Activated CD4-positive, alpha-beta T cell treated with anti-CD3 and anti-CD28 coated beads, Interleukin-2, amount 10 ng/mL, durations not matched to agents 24 days and 14 days (primary cell): ENCODE measurements at regions of chr5 and their contacts with region 1.

Region 1: DNA sequence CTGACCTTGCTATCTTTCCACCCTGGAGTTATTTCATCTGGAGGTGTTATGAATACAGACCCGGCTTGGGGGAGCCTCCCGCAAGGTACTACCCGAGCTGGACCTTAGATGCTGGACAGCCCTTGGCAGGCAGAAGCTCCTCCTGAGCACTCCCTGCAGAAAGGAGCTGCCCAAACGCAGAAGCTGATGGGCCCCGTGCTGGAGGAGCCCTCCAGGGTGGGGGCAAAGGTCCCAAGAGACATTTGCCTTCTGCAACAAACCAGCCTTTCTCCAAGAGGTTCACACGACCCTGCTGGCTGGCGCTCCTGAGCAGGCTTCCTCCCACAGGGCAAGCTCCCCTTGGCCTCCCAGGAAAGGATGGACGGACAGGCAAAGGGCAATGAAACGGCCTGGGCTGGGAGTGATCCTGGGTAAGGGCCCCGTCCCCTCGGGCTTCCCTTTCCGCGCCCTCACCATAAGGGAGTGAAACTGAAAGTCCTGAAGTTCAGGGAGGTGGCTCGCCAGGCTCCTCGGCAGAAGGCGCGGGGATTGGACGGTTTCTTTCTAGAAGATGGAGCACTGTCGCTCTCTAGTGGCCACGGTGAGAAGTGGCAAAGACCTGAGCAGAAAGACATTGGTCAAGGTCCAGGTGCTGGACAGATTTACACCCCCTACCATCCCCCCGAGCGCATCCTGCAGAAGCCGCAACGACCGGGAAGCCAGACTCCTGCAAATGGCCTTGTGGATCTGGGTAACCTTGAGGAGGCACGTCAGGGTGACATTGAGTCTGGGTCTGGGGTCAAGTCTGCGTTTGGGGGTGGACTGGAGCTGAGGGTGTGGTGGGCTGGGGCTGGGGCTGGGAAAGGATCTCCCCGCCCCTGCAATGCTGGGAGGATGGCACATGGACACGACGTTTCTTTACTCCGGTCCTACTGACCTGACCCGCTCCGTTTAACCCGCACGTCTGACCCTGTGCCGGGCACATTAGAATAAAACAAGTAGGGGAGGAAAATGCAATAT is 56.4 kb downstream of the NEURL1B start:
- DNase-seq: peak; percentile 95
- H3K4me3 Mint-ChIP-seq: peak overlapping the region; percentile 87
- H3K27ac Mint-ChIP-seq: peak overlapping the region; percentile 81
- H3K4me1 Mint-ChIP-seq: peaks cover 14% of the 10 kb centered on the region
- H3K27me3 Mint-ChIP-seq: peaks cover 22% of the 10 kb centered on the region

Region 2: DNA sequence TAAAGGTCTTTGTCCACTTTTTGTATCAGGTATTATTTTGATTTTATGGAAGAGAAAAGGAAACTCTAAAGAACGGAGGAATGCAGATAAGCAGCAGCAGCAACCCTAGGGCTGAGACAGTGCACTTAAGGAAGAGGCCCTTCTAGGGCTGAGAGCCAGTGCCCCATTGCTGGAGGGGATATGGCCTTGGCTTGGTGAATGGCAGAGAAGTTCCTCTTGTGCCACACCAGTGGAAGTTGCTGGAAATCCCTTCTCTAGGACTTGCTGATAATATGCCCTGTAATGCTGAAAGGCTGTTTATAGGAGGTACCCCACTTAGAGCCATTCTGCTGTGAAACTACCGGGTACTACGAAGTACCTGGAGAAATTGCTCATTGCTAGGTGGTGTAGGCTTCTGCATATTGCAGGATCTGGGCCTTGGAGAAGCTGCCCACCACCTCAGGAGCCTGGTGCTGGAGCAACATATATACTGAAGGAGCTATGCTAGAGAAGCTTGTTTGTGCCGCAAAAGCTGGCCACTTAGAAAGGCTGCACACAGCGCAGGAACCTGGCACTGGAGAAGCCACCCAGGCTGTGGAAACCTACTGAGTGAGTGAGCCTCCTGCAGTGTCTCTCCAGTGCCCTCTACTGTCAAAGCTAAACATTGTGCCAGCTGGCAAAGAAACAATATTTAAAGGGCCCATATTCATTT is 404.2 kb before region 1 on chr5:
- intact Hi-C with region 1: loop called (anchors 10 kb)
- DNase-seq: peak; percentile 89
- H3K4me3 Mint-ChIP-seq: no peak overlapping the region
- H3K27ac Mint-ChIP-seq: no peak overlapping the region
- H3K4me1 Mint-ChIP-seq: peaks cover 3% of the 10 kb centered on the region
- H3K27me3 Mint-ChIP-seq: peaks cover 10% of the 10 kb centered on the region

Region 3: DNA sequence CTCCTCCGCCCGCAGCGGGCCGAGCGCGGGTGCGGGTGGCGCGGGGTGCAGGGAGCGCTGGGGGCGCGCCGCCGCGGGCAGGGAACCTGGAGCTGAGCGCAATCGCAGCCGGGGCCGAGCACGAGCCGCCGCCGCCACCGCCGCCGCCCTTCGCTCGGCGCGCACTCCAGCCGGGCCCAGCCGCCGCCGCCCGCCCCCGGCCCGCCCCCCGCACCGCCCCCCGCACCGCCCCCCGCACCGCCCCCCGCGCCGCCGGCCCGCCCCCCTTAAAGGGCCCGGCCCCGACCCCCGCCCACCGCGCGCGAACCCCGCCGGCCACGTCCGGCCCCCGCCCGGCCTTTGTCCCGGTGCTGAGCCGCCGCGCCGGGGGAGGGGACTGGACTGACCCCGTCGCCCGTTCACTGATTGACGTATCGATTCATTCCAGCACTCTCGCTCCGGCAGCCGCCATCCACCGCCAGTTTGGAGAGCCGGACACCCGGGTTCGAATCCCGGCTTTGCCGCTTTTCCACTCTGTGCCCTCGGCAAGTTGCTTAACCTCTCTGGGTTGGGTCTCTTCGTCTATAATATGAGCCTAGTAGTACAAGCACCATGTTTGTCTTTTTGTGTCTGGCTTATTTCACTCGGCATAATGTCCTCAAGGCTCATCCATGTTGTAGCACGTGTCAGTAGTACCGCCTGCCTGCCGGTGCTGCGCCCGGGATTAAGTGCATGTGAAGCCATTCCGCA is 242.9 kb before region 1 on chr5 and contains the start of gene SH3PXD2B:
- intact Hi-C with region 1: loop called (anchors 2 kb)
- DNase-seq: peak; percentile 81
- H3K4me3 Mint-ChIP-seq: peak within 1 kb of the TSS; percentile 76
- H3K27ac Mint-ChIP-seq: no peak within 1 kb of the TSS
- H3K4me1 Mint-ChIP-seq: peaks cover 4% of the 10 kb centered on the region
- H3K27me3 Mint-ChIP-seq: peaks cover 60% of the 10 kb centered on the region
- total RNA-seq, gene SH3PXD2B: 0.16 and 0.19 TPM in 2 replicates

Region 4: GRCh38 chr5:172479044-172479783 is 218.2 kb before region 1 on chr5:
- intact Hi-C with region 1: loop called (anchors 1 kb)
- DNase-seq: peak; percentile 85
- H3K4me3 Mint-ChIP-seq: no peak overlapping the region
- H3K27ac Mint-ChIP-seq: no peak overlapping the region
- H3K4me1 Mint-ChIP-seq: no peaks in the 10 kb centered on the region
- H3K27me3 Mint-ChIP-seq: no peaks in the 10 kb centered on the region

Region 5: DNA sequence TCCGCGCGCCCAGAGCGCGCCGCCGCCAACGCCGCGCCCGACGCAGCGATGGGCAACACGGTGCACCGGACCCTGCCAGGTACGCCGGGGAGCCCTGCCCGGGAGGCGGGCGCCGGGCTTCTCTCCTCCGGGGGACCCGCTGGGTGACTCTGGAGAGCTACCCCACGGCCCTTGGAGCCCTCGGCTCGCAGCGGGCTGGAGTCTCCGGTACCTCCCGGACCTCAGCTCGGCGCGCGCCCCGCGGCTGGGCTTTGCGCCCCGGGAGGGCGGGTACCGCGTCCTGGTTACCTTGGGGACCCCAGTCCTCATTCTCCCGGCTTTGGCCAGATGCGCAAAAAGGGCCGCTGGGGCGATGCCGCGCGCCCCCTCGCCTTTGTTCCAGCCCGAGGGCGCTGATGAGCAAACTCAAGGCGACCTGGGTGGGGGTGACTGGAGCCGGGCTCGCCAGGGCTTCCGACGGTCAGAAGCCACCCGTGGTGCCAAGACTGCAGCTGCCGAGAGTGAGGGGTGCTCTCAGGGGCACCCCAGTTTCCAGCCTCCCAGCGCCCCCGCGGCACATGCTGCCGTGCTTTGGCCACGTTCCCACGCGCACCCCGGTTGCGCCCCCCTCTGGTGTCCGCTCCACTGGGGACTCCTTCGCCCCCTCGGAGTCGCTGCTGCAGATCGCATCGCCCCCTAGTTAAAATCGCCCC is 55.9 kb before region 1 on chr5:
- intact Hi-C with region 1: loop called (anchors 1 kb)
- DNase-seq: no peak
- H3K4me3 Mint-ChIP-seq: peak overlapping the region; percentile 55
- H3K27ac Mint-ChIP-seq: no peak overlapping the region
- H3K4me1 Mint-ChIP-seq: peaks cover 10% of the 10 kb centered on the region
- H3K27me3 Mint-ChIP-seq: peaks cover 46% of the 10 kb centered on the region